Naive thymus-derived CD4-positive, alpha-beta T cell (primary cell): ENCODE measurements at regions of chr12 and their contacts with region 1.

Region 1: GRCh38 chr12:56299853-56300643 is at the start of gene CS:
- DNase-seq: peak; percentile 95 to 99 (median 98)
- ATAC-seq: peak; percentile 98
- H3K4me3 ChIP-seq: peak within 1 kb of the TSS; percentile 73
- H3K4me3 Mint-ChIP-seq: peak within 1 kb of the TSS; percentile 93 to 100 (median 96)
- H3K27ac ChIP-seq: peak within 1 kb of the TSS; percentile 94
- H3K27ac Mint-ChIP-seq: peak within 1 kb of the TSS; percentile 93 to 99 (median 97)
- H3K4me1 ChIP-seq: peaks cover 26 to 48% of the 10 kb centered on the region in 2 donors
- H3K4me1 Mint-ChIP-seq: peaks cover 27 to 58% (median 53%) of the 10 kb centered on the region in 7 donors
- H3K27me3 ChIP-seq: no peaks in the 10 kb centered on the region
- H3K27me3 Mint-ChIP-seq: no peaks in the 10 kb centered on the region
- total RNA-seq, gene CS: 126 to 241 (median 167) TPM

Region 2: GRCh38 chr12:56020423-56021184 is 279.4 kb before region 1 on chr12 and contains the start of gene IKZF4:
- CTCF ChIA-PET with region 1: no interaction called
- POLR2A ChIA-PET with region 1: no interaction called
- intact Hi-C with region 1: no loop called
- DNase-seq: peak in 1 of 9 donors; percentile 36
- ATAC-seq: peak; percentile 55
- H3K4me3 ChIP-seq: peak within 1 kb of the TSS; percentile 41
- H3K4me3 Mint-ChIP-seq: peak within 1 kb of the TSS; percentile 80 to 97 (median 88)
- H3K27ac ChIP-seq: peak within 1 kb of the TSS; percentile 62
- H3K27ac Mint-ChIP-seq: peak within 1 kb of the TSS; percentile 73 to 97 (median 93)
- H3K4me1 ChIP-seq: peaks cover 0 to 16% of the 10 kb centered on the region in 2 donors
- H3K4me1 Mint-ChIP-seq: peaks cover 7 to 58% (median 24%) of the 10 kb centered on the region in 7 donors
- H3K27me3 ChIP-seq: no peaks in the 10 kb centered on the region
- H3K27me3 Mint-ChIP-seq: no peaks in the 10 kb centered on the region
- total RNA-seq, gene IKZF4: 3.6 to 37.8 (median 5.3) TPM

Region 3: DNA sequence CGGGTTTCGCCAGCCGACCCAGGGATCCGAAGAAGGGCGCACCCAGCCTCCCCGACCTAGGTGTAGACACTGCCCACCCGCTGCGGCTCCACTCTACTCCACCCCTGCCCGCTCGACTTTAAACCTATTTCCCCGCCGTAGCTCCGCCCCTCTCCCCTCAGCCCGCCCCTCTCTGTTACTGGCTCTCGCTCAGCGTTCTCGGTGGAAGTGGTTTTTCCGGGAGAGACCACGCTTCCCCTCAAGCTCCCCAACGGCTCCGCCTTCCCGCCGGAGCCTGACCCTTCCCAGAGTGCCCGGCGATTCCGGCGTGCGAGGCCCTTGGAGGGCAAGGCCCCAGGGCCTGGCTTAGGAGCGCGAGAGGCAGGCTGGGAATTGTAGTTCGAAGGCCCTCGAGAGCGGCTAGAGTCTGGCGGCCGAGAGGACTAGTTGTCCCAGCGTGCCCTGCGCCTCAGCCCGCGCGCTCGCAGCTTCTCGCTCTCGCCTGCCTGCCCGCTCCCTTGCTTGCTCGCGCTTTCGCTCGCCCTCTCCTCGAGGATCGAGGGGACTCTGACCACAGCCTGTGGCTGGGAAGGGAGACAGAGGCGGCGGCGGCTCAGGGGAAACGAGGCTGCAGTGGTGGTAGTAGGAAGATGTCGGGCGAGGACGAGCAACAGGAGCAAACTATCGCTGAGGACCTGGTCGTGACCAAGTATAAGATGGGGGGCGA is 195.8 kb before region 1 on chr12 and contains the start of gene PA2G4:
- CTCF ChIA-PET with region 1: no interaction called
- POLR2A ChIA-PET with region 1: interaction called, 5 read pairs
- intact Hi-C with region 1: loop called in 1 of 2 experiments (anchors 1 kb)
- DNase-seq: peak; percentile 83 to 97 (median 96)
- ATAC-seq: peak; percentile 93
- H3K4me3 ChIP-seq: peak within 1 kb of the TSS; percentile 87
- H3K4me3 Mint-ChIP-seq: peak within 1 kb of the TSS; percentile 91 to 100 (median 98)
- H3K27ac ChIP-seq: peak within 1 kb of the TSS; percentile 82
- H3K27ac Mint-ChIP-seq: peak within 1 kb of the TSS; percentile 92 to 99 (median 98)
- H3K4me1 ChIP-seq: peaks cover 36 to 37% of the 10 kb centered on the region in 2 donors
- H3K4me1 Mint-ChIP-seq: peaks cover 31 to 69% (median 64%) of the 10 kb centered on the region in 7 donors
- H3K27me3 ChIP-seq: no peaks in the 10 kb centered on the region
- H3K27me3 Mint-ChIP-seq: peaks cover 0 to under 1% (median 0%) of the 10 kb centered on the region in 5 donors
- total RNA-seq, gene PA2G4: 61.7 to 254 (median 109) TPM

Region 4: DNA sequence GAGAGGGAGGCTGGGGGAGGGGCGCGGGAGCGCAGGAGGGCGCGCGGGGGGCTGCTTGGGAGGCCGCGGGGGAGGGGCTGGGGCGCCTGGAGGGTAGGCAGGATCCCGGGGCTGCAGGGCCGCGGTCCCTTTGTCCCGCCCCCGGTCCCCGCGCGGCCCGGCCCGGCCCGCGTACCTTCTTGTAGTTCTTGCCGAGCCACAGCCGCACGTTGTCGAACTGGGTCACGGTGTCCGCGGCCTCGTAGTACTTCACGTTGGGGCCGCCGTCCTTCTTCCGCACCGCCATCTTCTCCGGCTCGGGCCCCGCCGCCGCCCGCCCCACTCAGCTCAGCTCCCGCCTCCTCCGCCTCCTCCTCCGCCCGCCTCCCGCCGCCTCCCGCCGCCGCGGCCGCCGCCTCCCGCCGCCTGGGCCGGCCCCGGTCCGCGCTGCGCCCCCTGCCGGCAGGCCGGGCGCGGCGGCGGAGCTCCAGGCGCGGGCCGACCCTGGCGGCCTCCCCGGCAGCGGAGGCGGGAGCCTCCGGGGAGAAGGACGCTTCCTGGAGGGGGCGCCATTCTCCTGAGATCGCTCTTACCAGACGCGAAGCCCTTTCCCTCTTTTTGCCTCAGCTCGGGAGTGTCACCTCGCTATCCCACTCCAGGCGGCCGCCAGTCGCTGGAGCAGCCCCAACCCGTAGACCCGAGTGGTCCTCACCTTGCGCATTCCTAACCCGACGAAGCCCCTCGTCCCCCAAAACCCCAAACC is 110.7 kb before region 1 on chr12 and contains the start of gene SMARCC2:
- CTCF ChIA-PET with region 1: interaction called, 5 read pairs
- POLR2A ChIA-PET with region 1: interaction called, 6 read pairs
- intact Hi-C with region 1: loop called in 1 of 2 experiments (anchors 1 kb)
- DNase-seq: peak; percentile 78 to 93 (median 82)
- ATAC-seq: peak; percentile 93
- H3K4me3 ChIP-seq: peak within 1 kb of the TSS; percentile 91
- H3K4me3 Mint-ChIP-seq: peak within 1 kb of the TSS; percentile 76 to 98 (median 95)
- H3K27ac ChIP-seq: peak within 1 kb of the TSS; percentile 92
- H3K27ac Mint-ChIP-seq: peak within 1 kb of the TSS; percentile 93 to 99 (median 98)
- H3K4me1 ChIP-seq: peaks cover 9 to 19% of the 10 kb centered on the region in 2 donors
- H3K4me1 Mint-ChIP-seq: peaks cover 37 to 55% (median 49%) of the 10 kb centered on the region in 7 donors
- H3K27me3 ChIP-seq: no peaks in the 10 kb centered on the region
- H3K27me3 Mint-ChIP-seq: peaks cover 0 to 4% (median 0%) of the 10 kb centered on the region in 5 donors
- total RNA-seq, gene SMARCC2: 118 to 187 (median 149) TPM

Region 5: GRCh38 chr12:56266693-56267442 is 33.2 kb before region 1 on chr12 and contains the start of gene COQ10A:
- CTCF ChIA-PET with region 1: no interaction called
- POLR2A ChIA-PET with region 1: interaction called, 3 read pairs
- intact Hi-C with region 1: loop called (anchors 1 kb)
- DNase-seq: peak; percentile 78 to 92 (median 89)
- ATAC-seq: peak; percentile 93
- H3K4me3 ChIP-seq: peak within 1 kb of the TSS; percentile 88
- H3K4me3 Mint-ChIP-seq: peak within 1 kb of the TSS; percentile 83 to 100 (median 96)
- H3K27ac ChIP-seq: peak within 1 kb of the TSS; percentile 94
- H3K27ac Mint-ChIP-seq: peak within 1 kb of the TSS; percentile 89 to 97 (median 94)
- H3K4me1 ChIP-seq: peaks cover 0 to 8% of the 10 kb centered on the region in 2 donors
- H3K4me1 Mint-ChIP-seq: peaks cover 0 to 22% (median 20%) of the 10 kb centered on the region in 7 donors
- H3K27me3 ChIP-seq: no peaks in the 10 kb centered on the region
- H3K27me3 Mint-ChIP-seq: peaks cover 0 to 2% (median 0%) of the 10 kb centered on the region in 5 donors
- total RNA-seq, gene COQ10A: 22.5 to 39.4 (median 31.5) TPM

Region 6: GRCh38 chr12:56333679-56334489 is 33.8 kb after region 1 on chr12 and contains the start of gene PAN2:
- CTCF ChIA-PET with region 1: no interaction called
- POLR2A ChIA-PET with region 1: no interaction called
- intact Hi-C with region 1: loop called (anchors 1 kb)
- DNase-seq: peak; percentile 74 to 94 (median 92)
- ATAC-seq: peak; percentile 90
- H3K4me3 ChIP-seq: peak within 1 kb of the TSS; percentile 93
- H3K4me3 Mint-ChIP-seq: peak within 1 kb of the TSS; percentile 89 to 99 (median 95)
- H3K27ac ChIP-seq: peak within 1 kb of the TSS; percentile 98
- H3K27ac Mint-ChIP-seq: peak within 1 kb of the TSS; percentile 97 to 100 (median 99)
- H3K4me1 ChIP-seq: peaks cover 27 to 30% of the 10 kb centered on the region in 2 donors
- H3K4me1 Mint-ChIP-seq: peaks cover 16 to 66% (median 48%) of the 10 kb centered on the region in 7 donors
- H3K27me3 ChIP-seq: no peaks in the 10 kb centered on the region
- H3K27me3 Mint-ChIP-seq: peaks cover 0 to 2% (median 0%) of the 10 kb centered on the region in 5 donors
- total RNA-seq, gene PAN2: 65.8 to 279 (median 144) TPM

Region 7: DNA sequence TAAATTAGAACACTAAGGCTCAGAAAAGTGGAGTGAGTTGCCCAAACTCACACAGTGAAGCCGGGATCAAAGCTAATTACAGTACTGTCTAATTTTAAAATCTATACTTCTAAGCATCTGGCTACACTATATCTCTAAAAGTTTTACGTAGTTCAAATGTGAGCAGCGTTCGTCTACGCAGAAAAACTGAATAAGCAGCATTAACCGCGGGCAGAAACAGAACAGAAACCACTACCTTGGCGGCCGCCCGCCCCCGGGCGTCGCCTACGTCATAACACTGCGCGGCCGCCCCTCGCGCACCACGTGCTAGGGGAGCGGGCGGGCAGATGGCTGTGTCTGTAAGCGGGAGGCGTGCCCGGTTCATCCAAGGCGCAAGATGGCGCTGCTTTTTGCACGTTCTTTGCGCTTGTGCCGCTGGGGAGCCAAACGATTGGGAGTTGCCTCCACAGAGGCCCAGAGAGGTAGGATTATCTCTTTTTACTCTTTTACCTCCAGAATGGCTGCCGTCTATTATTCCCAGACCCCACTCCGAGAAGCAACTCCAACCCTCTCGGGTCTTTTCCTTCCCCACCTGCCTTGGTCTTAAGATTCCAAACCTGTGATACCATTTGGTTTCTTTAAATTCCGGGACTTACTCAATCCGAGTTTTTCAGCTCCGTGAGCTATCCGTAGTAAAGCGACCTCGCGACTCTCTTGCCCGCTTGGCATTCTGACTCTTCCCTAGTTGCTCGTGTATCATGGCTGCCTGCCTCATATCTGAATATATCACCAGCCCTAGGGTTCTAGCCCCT is 168.4 kb after region 1 on chr12 and contains the start of gene SPRYD4:
- CTCF ChIA-PET with region 1: interaction called, 5 read pairs
- POLR2A ChIA-PET with region 1: interaction called, 3 read pairs
- intact Hi-C with region 1: loop called (anchors 1 kb)
- DNase-seq: peak; percentile 89 to 97 (median 96)
- ATAC-seq: peak; percentile 99
- H3K4me3 ChIP-seq: peak within 1 kb of the TSS; percentile 99
- H3K4me3 Mint-ChIP-seq: peak within 1 kb of the TSS; percentile 90 to 99 (median 97)
- H3K27ac ChIP-seq: peak within 1 kb of the TSS; percentile 87
- H3K27ac Mint-ChIP-seq: peak within 1 kb of the TSS; percentile 92 to 99 (median 98)
- H3K4me1 ChIP-seq: peaks cover 12 to 20% of the 10 kb centered on the region in 2 donors
- H3K4me1 Mint-ChIP-seq: peaks cover 6 to 51% (median 26%) of the 10 kb centered on the region in 7 donors
- H3K27me3 ChIP-seq: no peaks in the 10 kb centered on the region
- H3K27me3 Mint-ChIP-seq: no peaks in the 10 kb centered on the region
- total RNA-seq, gene SPRYD4: 5.2 to 7.5 (median 7.2) TPM